ENCODE measurements at regions of chr7 and their contacts with region 1.

Region 1: GRCh38 chr7:101217388-101218235 is at the starts of genes PLOD3 and ZNHIT1:
- DNase-seq: peak; percentile 95 to 97
- H3K4me3 ChIP-seq: peak within 1 kb of the TSS; percentile 75
- H3K4me3 Mint-ChIP-seq: peak within 1 kb of the TSS; percentile 83
- H3K27ac Mint-ChIP-seq: peak within 1 kb of the TSS; percentile 81
- H3K4me1 ChIP-seq: peaks cover 22% of the 10 kb centered on the region
- H3K4me1 Mint-ChIP-seq: peaks cover 30% of the 10 kb centered on the region
- H3K27me3 ChIP-seq: no peaks in the 10 kb centered on the region
- H3K27me3 Mint-ChIP-seq: no peaks in the 10 kb centered on the region
- CTCF ChIP-seq: peak; percentile 43 to 48
- total RNA-seq, gene PLOD3: 112 and 123 TPM in 2 replicates
- total RNA-seq, gene ZNHIT1: 64.0 and 66.2 TPM in 2 replicates

Region 2: DNA sequence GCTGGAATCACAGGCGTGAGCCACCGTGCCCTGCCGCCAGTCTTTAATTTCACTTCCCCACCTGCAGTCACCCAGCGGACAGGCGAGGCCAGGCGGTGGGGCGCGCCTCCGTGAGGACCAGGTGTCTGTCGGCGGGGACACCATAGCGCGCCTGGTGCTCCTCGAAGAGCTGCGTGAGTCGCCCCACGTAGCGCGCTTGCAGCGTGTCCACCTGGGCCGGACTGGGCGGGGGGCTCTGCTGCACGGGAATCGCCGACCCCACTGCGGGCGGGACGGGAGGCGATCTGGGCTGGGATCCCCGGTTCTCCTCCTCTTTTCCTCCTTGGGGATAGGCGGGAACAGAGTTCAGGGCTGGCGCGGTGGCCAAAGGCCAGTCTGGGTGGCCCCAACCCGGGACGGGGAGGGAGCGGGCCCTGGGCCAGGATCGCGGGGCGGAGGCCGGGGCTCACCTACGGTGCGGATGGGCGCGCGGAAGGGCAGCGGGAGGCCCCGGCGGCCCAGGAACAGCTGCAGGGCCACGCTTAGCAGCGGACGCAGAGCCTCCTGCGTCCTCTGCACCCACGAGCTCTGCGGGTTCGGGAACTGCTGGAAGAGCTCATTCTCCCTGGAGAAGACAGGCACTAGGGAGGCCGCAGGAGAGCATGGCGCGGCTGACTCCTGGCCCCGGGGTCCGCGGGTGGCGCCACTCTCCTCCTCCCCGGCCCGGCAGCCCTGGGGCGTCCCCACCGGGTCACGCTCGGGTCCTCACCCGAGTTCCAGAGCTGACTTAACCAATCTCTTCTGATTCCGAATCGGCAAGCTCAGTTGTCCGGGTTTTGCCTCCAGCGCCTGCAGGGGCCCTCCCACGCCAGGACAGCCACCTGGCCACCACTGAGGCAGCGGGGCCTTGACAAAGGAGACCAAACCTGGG is 15.7 kb before region 1 on chr7:
- CTCF ChIA-PET with region 1: interaction called, 9 read pairs
- POLR2A ChIA-PET with region 1: interaction called, 7 read pairs
- intact Hi-C with region 1: loop called (anchors 2 kb)
- DNase-seq: no peak
- H3K4me3 ChIP-seq: no peak overlapping the region
- H3K4me3 Mint-ChIP-seq: peak overlapping the region; percentile 70
- H3K27ac Mint-ChIP-seq: peak overlapping the region; percentile 70
- H3K4me1 ChIP-seq: peaks cover 20% of the 10 kb centered on the region
- H3K4me1 Mint-ChIP-seq: peaks cover 14% of the 10 kb centered on the region
- H3K27me3 ChIP-seq: no peaks in the 10 kb centered on the region
- H3K27me3 Mint-ChIP-seq: no peaks in the 10 kb centered on the region
- CTCF ChIP-seq: no peak

Region 3: DNA sequence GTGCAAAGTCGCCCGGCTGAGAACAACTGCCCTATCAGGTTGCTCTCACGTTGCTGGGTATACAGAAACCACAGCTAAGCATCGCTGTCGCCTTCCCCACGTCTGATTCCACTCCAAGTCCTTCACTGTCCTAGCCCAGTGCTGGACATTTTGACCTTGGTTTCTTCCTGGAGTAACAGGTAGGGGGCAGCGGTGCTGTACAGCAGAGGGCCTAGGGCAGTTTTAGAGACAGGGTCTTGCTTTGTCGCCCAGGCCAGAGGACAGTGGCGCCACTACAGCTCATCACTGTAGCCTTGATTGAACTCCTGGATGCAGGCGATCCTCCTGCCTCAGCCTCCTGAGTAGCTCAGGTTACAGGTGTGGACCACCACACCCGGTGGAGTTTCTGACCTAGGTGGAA is 17.4 kb after region 1 on chr7:
- CTCF ChIA-PET with region 1: interaction called, 15 read pairs
- POLR2A ChIA-PET with region 1: interaction called, 15 read pairs
- intact Hi-C with region 1: loop called (anchors 1 kb)
- DNase-seq: peak in 1 of 2 experiments; percentile 41
- H3K4me3 ChIP-seq: no peak overlapping the region
- H3K4me3 Mint-ChIP-seq: peak overlapping the region; percentile 44
- H3K27ac Mint-ChIP-seq: no peak overlapping the region
- H3K4me1 ChIP-seq: peaks cover 21% of the 10 kb centered on the region
- H3K4me1 Mint-ChIP-seq: peaks cover 26% of the 10 kb centered on the region
- H3K27me3 ChIP-seq: no peaks in the 10 kb centered on the region
- H3K27me3 Mint-ChIP-seq: no peaks in the 10 kb centered on the region
- CTCF ChIP-seq: peak; percentile 17 to 23

Region 4: GRCh38 chr7:101244375-101245146 is 26.9 kb after region 1 on chr7 and contains the start of gene FIS1:
- CTCF ChIA-PET with region 1: interaction called, 49 read pairs
- POLR2A ChIA-PET with region 1: interaction called, 10 read pairs
- intact Hi-C with region 1: loop called (anchors 1 kb)
- DNase-seq: peak; percentile 94 to 95
- H3K4me3 ChIP-seq: peak within 1 kb of the TSS; percentile 95
- H3K4me3 Mint-ChIP-seq: peak within 1 kb of the TSS; percentile 92
- H3K27ac Mint-ChIP-seq: peak within 1 kb of the TSS; percentile 93
- H3K4me1 ChIP-seq: peaks cover 13% of the 10 kb centered on the region; the same call in 1 of the 2 replicates
- H3K4me1 Mint-ChIP-seq: peaks cover 10% of the 10 kb centered on the region
- H3K27me3 ChIP-seq: no peaks in the 10 kb centered on the region
- H3K27me3 Mint-ChIP-seq: no peaks in the 10 kb centered on the region
- CTCF ChIP-seq: peak; percentile 93 to 95
- total RNA-seq, gene FIS1: 97.9 and 99.9 TPM in 2 replicates

Region 5: GRCh38 chr7:101251871-101252659 is 34.5 kb after region 1 on chr7:
- CTCF ChIA-PET with region 1: interaction called, 3 read pairs
- POLR2A ChIA-PET with region 1: interaction called, 6 read pairs
- intact Hi-C with region 1: loop called (anchors 2 kb)
- DNase-seq: peak; percentile 99 to 100
- H3K4me3 ChIP-seq: peak overlapping the region; percentile 80
- H3K4me3 Mint-ChIP-seq: peak overlapping the region; percentile 88
- H3K27ac Mint-ChIP-seq: peak overlapping the region; percentile 92
- H3K4me1 ChIP-seq: no peaks in the 10 kb centered on the region
- H3K4me1 Mint-ChIP-seq: peaks cover 6% of the 10 kb centered on the region
- H3K27me3 ChIP-seq: no peaks in the 10 kb centered on the region
- H3K27me3 Mint-ChIP-seq: no peaks in the 10 kb centered on the region
- CTCF ChIP-seq: no peak

Region 6: DNA sequence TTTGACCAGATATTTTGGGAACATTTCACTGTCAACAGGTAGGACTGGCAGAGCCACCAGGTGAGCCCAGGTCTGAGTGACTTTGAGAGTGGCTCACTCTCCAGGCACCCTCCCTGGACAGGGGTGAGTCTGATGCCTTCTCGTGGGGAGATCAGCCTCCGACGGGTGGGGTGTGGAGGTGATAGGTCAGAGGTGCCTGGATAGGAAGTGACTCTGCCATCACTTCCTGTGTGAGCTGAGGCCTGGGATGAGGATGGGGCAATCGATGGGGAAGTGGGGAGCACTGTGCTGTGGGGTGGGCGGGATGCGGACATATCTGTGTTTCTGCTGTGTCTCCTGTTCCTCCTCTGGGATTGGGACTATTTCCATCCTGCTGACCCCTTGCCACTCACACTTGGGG is 69.4 kb after region 1 on chr7:
- CTCF ChIA-PET with region 1: interaction called, 21 read pairs
- POLR2A ChIA-PET with region 1: interaction called, 5 read pairs
- intact Hi-C with region 1: no loop called
- DNase-seq: no peak
- H3K4me3 ChIP-seq: no peak overlapping the region
- H3K4me3 Mint-ChIP-seq: no peak overlapping the region
- H3K27ac Mint-ChIP-seq: no peak overlapping the region
- H3K4me1 ChIP-seq: no peaks in the 10 kb centered on the region
- H3K4me1 Mint-ChIP-seq: peaks cover 6% of the 10 kb centered on the region
- H3K27me3 ChIP-seq: no peaks in the 10 kb centered on the region
- H3K27me3 Mint-ChIP-seq: peaks cover 14% of the 10 kb centered on the region
- CTCF ChIP-seq: no peak